B cell (primary cell): ENCODE measurements at regions of chr14 and their contacts with region 1.

Region 1: GRCh38 chr14:64636208-64636979 is 67.8 kb upstream of the PLEKHG3 start:
- DNase-seq: peak; percentile 77
- ATAC-seq: peak; percentile 95
- H3K4me3 ChIP-seq: no peak overlapping the region
- H3K4me3 Mint-ChIP-seq: no peak overlapping the region
- H3K27ac ChIP-seq: no peak overlapping the region
- H3K27ac Mint-ChIP-seq: no peak overlapping the region
- H3K4me1 ChIP-seq: peaks cover 5 to 20% of the 10 kb centered on the region in 2 donors
- H3K4me1 Mint-ChIP-seq: peaks cover 11% of the 10 kb centered on the region
- H3K27me3 ChIP-seq: peaks cover 0 to 4% (median 0%) of the 10 kb centered on the region in 4 experiments
- H3K27me3 Mint-ChIP-seq: peaks cover 8% of the 10 kb centered on the region
- CTCF ChIP-seq: peak; percentile 96

Region 2: GRCh38 chr14:64345513-64345912 is 290.9 kb before region 1 on chr14:
- CTCF ChIA-PET with region 1: interaction called, 55 read pairs
- POLR2A ChIA-PET with region 1: no interaction called
- intact Hi-C with region 1: no loop called
- DNase-seq: no peak
- ATAC-seq: no peak
- H3K4me3 ChIP-seq: no peak overlapping the region
- H3K4me3 Mint-ChIP-seq: no peak overlapping the region
- H3K27ac ChIP-seq: no peak overlapping the region
- H3K27ac Mint-ChIP-seq: no peak overlapping the region
- H3K4me1 ChIP-seq: no peaks in the 10 kb centered on the region
- H3K4me1 Mint-ChIP-seq: peaks cover 7% of the 10 kb centered on the region
- H3K27me3 ChIP-seq: no peaks in the 10 kb centered on the region
- H3K27me3 Mint-ChIP-seq: no peaks in the 10 kb centered on the region
- CTCF ChIP-seq: no peak

Region 3: DNA sequence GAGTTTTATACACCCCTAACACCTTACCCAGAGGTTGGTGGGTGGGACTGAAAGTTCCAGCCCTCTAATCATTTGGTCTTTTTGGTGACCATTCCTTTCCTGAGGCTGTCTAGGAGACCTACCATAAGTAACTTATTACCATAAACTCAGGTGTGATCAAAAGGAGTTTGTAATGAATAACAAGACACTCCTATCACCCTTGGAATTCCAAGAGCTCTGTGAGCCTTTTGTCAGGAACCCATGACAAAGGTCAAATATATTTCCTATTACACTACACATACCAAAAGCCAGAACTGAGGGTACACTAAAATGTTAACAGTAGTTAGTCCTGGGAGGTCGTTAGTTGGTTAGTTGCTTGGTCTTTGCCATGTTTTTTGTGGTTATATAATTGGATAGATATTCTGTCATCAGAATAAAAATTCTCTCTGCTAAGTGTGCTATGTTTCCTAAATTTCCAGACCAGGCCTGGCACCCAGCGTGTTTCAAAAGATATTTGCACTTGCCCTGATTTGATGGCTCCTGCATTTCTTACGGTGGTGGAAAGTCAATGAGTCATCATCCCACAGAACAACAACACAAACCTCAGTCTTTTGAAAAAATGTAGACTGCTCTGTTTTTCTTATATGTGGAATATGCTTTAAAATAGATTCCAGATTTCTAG is 198.1 kb before region 1 on chr14:
- CTCF ChIA-PET with region 1: no interaction called
- POLR2A ChIA-PET with region 1: no interaction called
- intact Hi-C with region 1: loop called (anchors 5 kb)
- DNase-seq: no peak
- ATAC-seq: no peak
- H3K4me3 ChIP-seq: no peak overlapping the region
- H3K4me3 Mint-ChIP-seq: no peak overlapping the region
- H3K27ac ChIP-seq: no peak overlapping the region
- H3K27ac Mint-ChIP-seq: no peak overlapping the region
- H3K4me1 ChIP-seq: peaks cover 0 to under 1% of the 10 kb centered on the region in 2 donors
- H3K4me1 Mint-ChIP-seq: peaks cover under 1% of the 10 kb centered on the region
- H3K27me3 ChIP-seq: no peaks in the 10 kb centered on the region
- H3K27me3 Mint-ChIP-seq: no peaks in the 10 kb centered on the region
- CTCF ChIP-seq: no peak

Region 4: GRCh38 chr14:64540208-64541157 is 95.9 kb before region 1 on chr14 and contains the start of gene HSPA2:
- CTCF ChIA-PET with region 1: interaction called, 8 read pairs
- POLR2A ChIA-PET with region 1: no interaction called
- intact Hi-C with region 1: loop called (anchors 5 kb)
- DNase-seq: peak; percentile 98
- ATAC-seq: peak; percentile 90
- H3K4me3 ChIP-seq: peak within 1 kb of the TSS; percentile 74 to 98 (median 85)
- H3K4me3 Mint-ChIP-seq: peak within 1 kb of the TSS; percentile 100
- H3K27ac ChIP-seq: peak within 1 kb of the TSS; percentile 60 to 67
- H3K27ac Mint-ChIP-seq: peak within 1 kb of the TSS; percentile 97
- H3K4me1 ChIP-seq: peaks cover 26 to 32% of the 10 kb centered on the region in 2 donors
- H3K4me1 Mint-ChIP-seq: peaks cover 31% of the 10 kb centered on the region
- H3K27me3 ChIP-seq: peaks cover 0 to 19% (median 5%) of the 10 kb centered on the region in 4 experiments
- H3K27me3 Mint-ChIP-seq: peaks cover 5% of the 10 kb centered on the region
- CTCF ChIP-seq: peak; percentile 78
- total RNA-seq, gene HSPA2: 14.9 and 19.6 TPM in 2 replicates

Region 5: DNA sequence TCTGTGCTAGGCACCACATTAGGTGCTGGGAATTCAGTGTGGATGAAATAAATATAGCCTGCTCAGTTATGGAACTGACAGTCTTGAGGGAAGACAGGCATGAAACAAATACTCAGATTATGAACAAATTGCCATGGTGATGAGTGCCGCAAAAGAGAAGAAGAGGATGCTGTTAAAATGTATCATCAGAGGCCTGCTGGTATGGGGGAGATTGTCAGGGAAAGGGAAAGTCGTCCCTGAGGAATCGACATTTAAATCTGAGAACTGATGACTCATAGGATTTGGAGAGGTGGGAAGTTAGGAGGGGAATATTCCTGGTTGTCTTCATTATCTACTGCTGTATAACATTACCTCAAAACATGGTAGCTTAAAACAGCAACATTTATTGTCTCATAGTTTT is 44.6 kb before region 1 on chr14:
- CTCF ChIA-PET with region 1: no interaction called
- POLR2A ChIA-PET with region 1: no interaction called
- intact Hi-C with region 1: no loop called
- DNase-seq: no peak
- ATAC-seq: no peak
- H3K4me3 ChIP-seq: no peak overlapping the region
- H3K4me3 Mint-ChIP-seq: no peak overlapping the region
- H3K27ac ChIP-seq: no peak overlapping the region
- H3K27ac Mint-ChIP-seq: no peak overlapping the region
- H3K4me1 ChIP-seq: no peaks in the 10 kb centered on the region
- H3K4me1 Mint-ChIP-seq: no peaks in the 10 kb centered on the region
- H3K27me3 ChIP-seq: peaks cover 0 to 3% (median 0%) of the 10 kb centered on the region in 4 experiments
- H3K27me3 Mint-ChIP-seq: peaks cover 3% of the 10 kb centered on the region
- CTCF ChIP-seq: no peak

Region 6: DNA sequence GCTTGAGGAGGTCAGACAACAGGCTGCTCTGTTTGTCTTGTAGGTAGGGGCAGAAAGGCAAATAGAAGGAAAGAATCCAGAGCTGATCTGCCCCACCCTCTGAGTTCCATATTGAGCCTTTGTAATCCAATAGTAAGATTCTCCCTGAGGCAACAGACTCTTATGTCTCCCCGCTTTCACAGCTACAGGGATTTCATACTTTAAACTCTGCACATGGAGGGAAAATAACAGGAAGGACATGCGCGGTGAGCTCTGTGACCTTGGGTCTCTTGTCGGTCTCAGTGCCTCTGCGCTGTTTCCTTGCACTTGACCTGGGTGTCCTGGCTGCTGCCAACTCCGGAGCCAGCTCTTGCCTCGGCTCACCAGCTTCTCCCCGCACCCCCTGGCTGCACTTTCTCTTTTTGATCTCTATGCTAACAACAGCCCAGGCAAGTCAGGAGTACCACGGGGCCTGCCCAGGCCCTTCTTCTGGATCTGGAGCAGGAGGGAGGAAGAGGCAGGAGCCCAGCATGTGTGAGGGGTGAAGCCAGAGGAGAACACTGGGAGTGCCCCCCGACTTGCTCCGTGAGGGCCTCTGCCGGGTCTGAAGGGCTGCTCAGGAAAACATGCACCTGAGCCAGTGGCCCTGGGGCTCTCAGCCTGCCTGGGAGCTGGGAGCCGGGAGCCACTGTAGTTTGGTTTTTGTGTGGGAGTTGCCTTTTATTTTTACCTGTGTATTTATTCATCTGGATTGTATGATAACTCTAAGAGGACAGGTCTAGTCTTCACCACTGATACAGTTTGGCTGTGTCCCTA is 10.7 kb before region 1 on chr14:
- CTCF ChIA-PET with region 1: interaction called, 20 read pairs
- POLR2A ChIA-PET with region 1: no interaction called
- intact Hi-C with region 1: no loop called
- DNase-seq: no peak
- ATAC-seq: no peak
- H3K4me3 ChIP-seq: no peak overlapping the region
- H3K4me3 Mint-ChIP-seq: no peak overlapping the region
- H3K27ac ChIP-seq: no peak overlapping the region
- H3K27ac Mint-ChIP-seq: no peak overlapping the region
- H3K4me1 ChIP-seq: no peaks in the 10 kb centered on the region
- H3K4me1 Mint-ChIP-seq: no peaks in the 10 kb centered on the region
- H3K27me3 ChIP-seq: peaks cover 0 to 2% (median 0%) of the 10 kb centered on the region in 4 experiments
- H3K27me3 Mint-ChIP-seq: peaks cover 14% of the 10 kb centered on the region
- CTCF ChIP-seq: no peak

Region 7: GRCh38 chr14:64736271-64737122 is 100.1 kb after region 1 on chr14:
- CTCF ChIA-PET with region 1: no interaction called
- POLR2A ChIA-PET with region 1: no interaction called
- intact Hi-C with region 1: no loop called
- DNase-seq: no peak
- ATAC-seq: no peak
- H3K4me3 ChIP-seq: no peak overlapping the region
- H3K4me3 Mint-ChIP-seq: no peak overlapping the region
- H3K27ac ChIP-seq: no peak overlapping the region
- H3K27ac Mint-ChIP-seq: no peak overlapping the region
- H3K4me1 ChIP-seq: no peaks in the 10 kb centered on the region
- H3K4me1 Mint-ChIP-seq: no peaks in the 10 kb centered on the region
- H3K27me3 ChIP-seq: no peaks in the 10 kb centered on the region
- H3K27me3 Mint-ChIP-seq: peaks cover under 1% of the 10 kb centered on the region
- CTCF ChIP-seq: no peak